ENCODE measurements at regions of chr11 and their contacts with region 1.

Region 1: DNA sequence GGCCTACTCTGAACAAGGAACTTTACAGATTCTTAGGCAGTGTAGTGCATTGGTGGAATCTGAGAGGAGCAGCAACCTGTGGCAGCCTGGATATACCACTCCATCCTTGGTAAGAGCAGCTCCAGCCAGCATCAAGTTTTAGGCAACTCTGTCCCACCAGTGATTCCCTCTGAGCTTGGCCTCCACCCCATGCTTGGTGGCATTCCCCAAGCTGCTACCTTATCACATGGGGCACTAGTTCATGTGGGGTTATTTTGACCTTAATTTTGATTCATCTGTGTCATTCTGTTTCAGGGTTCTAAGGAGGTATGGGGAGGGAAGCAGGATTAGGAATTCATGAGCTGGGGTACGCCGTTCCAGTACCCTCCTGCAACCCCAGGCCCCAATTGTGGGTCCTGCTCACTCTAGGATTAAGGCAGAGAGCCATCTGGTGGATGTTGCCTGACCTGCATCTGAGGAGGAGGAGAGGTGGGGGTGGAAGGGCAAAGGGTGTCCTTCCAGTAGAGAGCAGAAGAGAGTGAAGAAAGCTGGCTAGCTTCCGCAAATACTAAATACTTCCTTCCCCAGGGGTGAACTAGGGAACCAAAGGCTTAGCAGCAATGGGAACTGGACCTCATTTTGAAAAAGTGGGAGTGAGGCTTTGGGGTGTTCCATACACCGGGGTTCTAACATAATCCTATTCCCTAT is 10.5 kb downstream of the LRRC51 start:
- DNase-seq: no peak
- H3K4me3 ChIP-seq: no peak overlapping the region
- H3K27ac ChIP-seq: peak overlapping the region; percentile 29 to 68 (median 57)
- H3K4me1 ChIP-seq: peaks cover 0 to 27% (median 6%) of the 10 kb centered on the region in 3 donors
- H3K27me3 ChIP-seq: no peaks in the 10 kb centered on the region
- CTCF ChIP-seq: peak; percentile 72 to 92 (median 90)
- POLR2A ChIP-seq: no peak

Region 2: GRCh38 chr11:72024069-72024754 is 66.9 kb before region 1 on chr11:
- intact Hi-C with region 1: loop called (anchors 5 kb)
- DNase-seq: no peak
- H3K4me3 ChIP-seq: no peak overlapping the region
- H3K27ac ChIP-seq: peak overlapping the region in 3 of 4 donors; percentile 16 to 72 (median 70)
- H3K4me1 ChIP-seq: peaks cover 12 to 53% (median 25%) of the 10 kb centered on the region in 3 donors
- H3K27me3 ChIP-seq: no peaks in the 10 kb centered on the region
- CTCF ChIP-seq: no peak
- POLR2A ChIP-seq: no peak

Region 3: GRCh38 chr11:72430741-72431570 is 339.8 kb after region 1 on chr11:
- intact Hi-C with region 1: no loop called
- DNase-seq: no peak
- H3K4me3 ChIP-seq: no peak overlapping the region
- H3K27ac ChIP-seq: no peak overlapping the region
- H3K4me1 ChIP-seq: peaks cover 7 to 32% (median 12%) of the 10 kb centered on the region in 3 donors
- H3K27me3 ChIP-seq: no peaks in the 10 kb centered on the region
- CTCF ChIP-seq: peak; percentile 55 to 77 (median 70)
- POLR2A ChIP-seq: no peak